ENCODE measurements at regions of chr5 and their contacts with region 1.

Region 1: GRCh38 chr5:79133657-79134451 is 22.2 kb downstream of the BHMT start:
- DNase-seq: peak; percentile 88
- H3K4me3 ChIP-seq: peak overlapping the region in 2 of 3 experiments; percentile 0 to 50
- H3K27ac ChIP-seq: peak overlapping the region; percentile 62
- H3K4me1 ChIP-seq: peaks cover 11% of the 10 kb centered on the region
- H3K27me3 ChIP-seq: peaks cover 2 to 3% of the 10 kb centered on the region in 2 experiments
- CTCF ChIP-seq: peak; percentile 69 to 78
- POLR2A ChIP-seq: no peak

Region 2: DNA sequence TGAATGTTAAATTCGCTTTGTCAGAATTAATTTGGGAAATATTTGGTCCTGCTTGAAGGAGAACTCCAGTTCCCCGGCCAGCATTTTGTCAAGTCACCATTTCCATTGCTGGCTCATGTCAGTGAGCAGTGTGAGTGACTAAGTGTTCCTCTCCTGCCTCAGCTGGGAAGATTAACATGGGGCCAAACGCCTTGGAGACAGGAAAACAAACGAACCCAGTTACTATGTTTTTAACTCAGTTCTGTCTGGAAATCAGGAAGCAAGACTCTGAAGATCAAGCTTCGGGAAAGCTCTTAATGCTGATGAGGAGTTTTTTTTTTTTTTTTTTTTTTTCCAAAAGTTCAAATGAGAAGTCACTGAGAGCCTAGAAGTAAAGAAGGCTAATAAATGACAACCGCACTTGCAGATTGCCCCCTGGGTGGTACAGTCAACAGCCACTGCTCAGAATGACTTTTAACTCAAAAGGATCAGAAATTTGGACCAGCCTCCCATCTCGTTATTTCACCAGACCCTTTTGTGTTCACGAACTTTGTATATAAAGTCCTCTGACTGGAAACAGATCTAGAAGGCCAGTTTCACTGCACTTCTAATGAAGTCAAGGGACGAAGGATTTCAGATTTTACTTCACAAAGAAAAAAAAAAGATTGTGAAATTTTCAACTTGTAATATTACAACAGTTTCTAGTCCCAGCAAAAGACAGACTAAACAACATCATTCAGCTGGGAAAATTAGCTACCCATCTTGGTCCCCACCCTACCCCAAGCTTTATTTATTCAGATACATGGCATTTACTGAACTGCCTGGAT is 606.6 kb before region 1 on chr5:
- CTCF ChIA-PET with region 1: no interaction called
- POLR2A ChIA-PET with region 1: no interaction called
- dilution Hi-C with region 1: no loop called
- intact Hi-C with region 1: loop called (anchors 5 kb)
- DNase-seq: peak; percentile 99
- H3K4me3 ChIP-seq: peak overlapping the region in 1 of 3 experiments; percentile 1
- H3K27ac ChIP-seq: peak overlapping the region; percentile 99
- H3K4me1 ChIP-seq: peaks cover 84% of the 10 kb centered on the region
- H3K27me3 ChIP-seq: no peaks in the 10 kb centered on the region
- CTCF ChIP-seq: no peak
- POLR2A ChIP-seq: no peak

Region 3: GRCh38 chr5:78920604-78921003 is 213.2 kb before region 1 on chr5:
- CTCF ChIA-PET with region 1: no interaction called
- POLR2A ChIA-PET with region 1: no interaction called
- dilution Hi-C with region 1: no loop called
- intact Hi-C with region 1: no loop called
- DNase-seq: no peak
- H3K4me3 ChIP-seq: no peak overlapping the region
- H3K27ac ChIP-seq: no peak overlapping the region
- H3K4me1 ChIP-seq: no peaks in the 10 kb centered on the region
- H3K27me3 ChIP-seq: no peaks in the 10 kb centered on the region
- CTCF ChIP-seq: peak in 1 of 2 donors; percentile 13
- POLR2A ChIP-seq: no peak

Region 4: DNA sequence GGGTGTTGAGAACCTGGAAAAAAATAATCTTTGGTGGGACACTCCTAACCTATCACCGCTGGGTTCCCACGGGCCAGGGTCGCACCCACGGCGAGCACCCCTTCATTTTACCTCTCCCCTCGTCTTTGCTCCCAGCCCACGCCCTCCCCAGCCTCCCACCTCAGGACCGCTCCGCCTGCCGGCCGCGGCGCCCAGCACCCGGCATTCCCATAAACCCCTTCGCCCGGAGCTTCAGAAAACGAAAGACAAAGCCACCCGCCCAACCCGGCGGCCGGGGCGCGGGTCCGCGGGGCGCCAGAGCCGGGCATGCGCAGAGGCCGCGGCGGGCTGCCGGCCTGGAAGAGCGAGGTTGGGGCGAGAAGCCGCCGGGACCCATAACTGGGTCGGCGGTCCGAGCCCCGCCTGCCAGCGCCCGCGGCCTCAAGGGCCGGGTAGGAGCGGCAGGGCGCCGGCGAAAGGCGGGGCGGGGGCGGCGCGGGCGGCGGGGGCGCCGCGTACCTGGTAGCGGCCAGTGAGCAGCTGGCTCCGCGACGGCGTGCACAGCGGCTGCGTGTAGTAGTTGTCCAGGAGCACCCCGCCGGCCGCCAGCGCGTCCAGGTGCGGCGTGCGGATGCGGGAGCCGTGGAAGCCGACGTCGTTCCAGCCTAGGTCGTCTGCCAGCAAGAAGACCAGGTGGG is 149.3 kb before region 1 on chr5:
- CTCF ChIA-PET with region 1: interaction called, 19 read pairs
- POLR2A ChIA-PET with region 1: no interaction called
- dilution Hi-C with region 1: no loop called
- intact Hi-C with region 1: loop called (anchors 1 kb)
- DNase-seq: peak; percentile 87
- H3K4me3 ChIP-seq: peak overlapping the region; percentile 71 to 96 (median 80)
- H3K27ac ChIP-seq: peak overlapping the region; percentile 88
- H3K4me1 ChIP-seq: peaks cover 19% of the 10 kb centered on the region
- H3K27me3 ChIP-seq: no peaks in the 10 kb centered on the region
- CTCF ChIP-seq: peak in 1 of 2 donors; percentile 45
- POLR2A ChIP-seq: peak; percentile 6

Region 5: GRCh38 chr5:79122973-79123372 is 10.9 kb before region 1 on chr5:
- CTCF ChIA-PET with region 1: interaction called, 19 read pairs
- POLR2A ChIA-PET with region 1: no interaction called
- dilution Hi-C with region 1: no loop called
- intact Hi-C with region 1: no loop called
- DNase-seq: no peak
- H3K4me3 ChIP-seq: no peak overlapping the region
- H3K27ac ChIP-seq: no peak overlapping the region
- H3K4me1 ChIP-seq: no peaks in the 10 kb centered on the region
- H3K27me3 ChIP-seq: no peaks in the 10 kb centered on the region
- CTCF ChIP-seq: no peak
- POLR2A ChIP-seq: no peak

Region 6: GRCh38 chr5:79205965-79206364 is 72.1 kb after region 1 on chr5:
- CTCF ChIA-PET with region 1: interaction called, 15 read pairs
- POLR2A ChIA-PET with region 1: no interaction called
- dilution Hi-C with region 1: no loop called
- intact Hi-C with region 1: no loop called
- DNase-seq: no peak
- H3K4me3 ChIP-seq: no peak overlapping the region
- H3K27ac ChIP-seq: no peak overlapping the region
- H3K4me1 ChIP-seq: peaks cover 15% of the 10 kb centered on the region
- H3K27me3 ChIP-seq: no peaks in the 10 kb centered on the region
- CTCF ChIP-seq: no peak
- POLR2A ChIP-seq: no peak

Region 7: DNA sequence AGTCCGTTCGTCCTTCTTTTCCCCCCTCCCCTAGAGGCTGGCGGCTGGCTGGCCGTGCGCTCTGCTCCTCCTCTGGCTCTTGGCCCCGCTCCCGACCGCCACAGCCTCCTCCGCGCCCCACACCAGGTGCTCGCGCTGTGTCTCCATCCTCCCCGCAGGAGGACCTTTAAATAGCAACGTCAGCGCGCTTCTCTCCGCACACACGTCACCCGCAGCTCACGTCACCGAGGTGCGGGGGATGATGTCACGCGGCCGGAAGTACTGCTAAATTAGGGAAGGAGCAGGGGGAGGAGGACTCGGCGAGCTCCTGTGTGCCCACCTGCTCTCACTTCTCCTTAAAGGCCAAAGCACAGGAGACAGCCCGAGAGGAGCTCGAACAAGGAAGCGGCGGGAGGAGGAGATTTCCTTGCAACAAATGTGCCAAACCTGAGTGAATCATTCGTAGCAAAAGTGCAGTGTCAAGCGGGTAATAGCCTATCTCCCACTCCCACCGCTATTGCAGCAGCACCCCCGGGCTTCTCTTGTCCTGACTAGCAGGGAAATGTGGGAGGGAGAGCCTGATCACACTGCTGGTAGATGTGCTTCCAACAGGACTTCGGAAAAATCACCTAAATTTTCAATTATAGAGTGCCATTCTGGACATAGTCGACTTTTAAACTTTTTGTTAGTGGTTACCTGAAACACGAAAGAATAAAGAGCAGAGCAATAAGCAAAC is 380.7 kb after region 1 on chr5:
- CTCF ChIA-PET with region 1: interaction called, 9 read pairs
- POLR2A ChIA-PET with region 1: no interaction called
- dilution Hi-C with region 1: no loop called
- intact Hi-C with region 1: loop called (anchors 1 kb)
- DNase-seq: peak; percentile 86
- H3K4me3 ChIP-seq: peak overlapping the region; percentile 80 to 89 (median 87)
- H3K27ac ChIP-seq: peak overlapping the region; percentile 68
- H3K4me1 ChIP-seq: peaks cover 23% of the 10 kb centered on the region
- H3K27me3 ChIP-seq: peaks cover 0 to 2% of the 10 kb centered on the region in 2 experiments
- CTCF ChIP-seq: no peak
- POLR2A ChIP-seq: peak; percentile 11